ENCODE measurements at regions of chr1 and their contacts with region 1.

Region 1: DNA sequence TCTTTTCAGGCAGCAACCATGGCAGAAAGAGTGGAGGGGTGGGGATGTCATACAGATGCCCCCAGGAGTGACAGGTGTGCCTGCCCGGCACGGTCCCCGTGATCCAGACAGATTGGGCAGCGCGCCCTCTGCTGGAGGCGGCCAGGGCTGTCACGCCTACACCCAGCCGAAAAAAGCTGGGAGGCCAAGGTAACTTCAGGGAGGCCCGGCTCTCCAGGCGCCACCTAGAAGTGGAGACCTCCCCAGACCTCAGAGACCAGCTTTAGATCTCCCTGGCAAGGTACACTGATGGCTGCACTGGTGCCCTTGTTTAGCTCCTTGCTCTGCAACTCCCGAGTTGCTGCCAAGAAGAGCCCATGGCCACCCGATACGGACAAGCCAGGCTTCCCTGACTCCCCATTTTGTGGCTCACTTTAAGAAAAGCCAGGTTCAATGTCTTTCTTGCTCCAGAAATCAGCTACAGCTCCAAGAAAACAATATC is 6.6 kb downstream of the GOLT1A start:
- DNase-seq: peak; percentile 77
- H3K4me3 ChIP-seq: no peak overlapping the region
- H3K27ac ChIP-seq: no peak overlapping the region
- H3K4me1 ChIP-seq: peaks cover 0 to 6% (median 2%) of the 10 kb centered on the region in 4 donors
- H3K27me3 ChIP-seq: peaks cover 0 to 42% (median 0%) of the 10 kb centered on the region in 3 donors
- CTCF ChIP-seq: peak; percentile 53 to 88 (median 71)
- EP300 ChIP-seq: no peak
- POLR2A ChIP-seq: no peak

Region 2: GRCh38 chr1:203769505-203770343 is 437.5 kb before region 1 on chr1:
- intact Hi-C with region 1: no loop called
- DNase-seq: peak; percentile 92
- H3K4me3 ChIP-seq: peak overlapping the region in 2 of 4 donors; percentile 21 to 31
- H3K27ac ChIP-seq: peak overlapping the region; percentile 49 to 74 (median 63)
- H3K4me1 ChIP-seq: peaks cover 0 to 34% (median 22%) of the 10 kb centered on the region in 4 donors
- H3K27me3 ChIP-seq: no peaks in the 10 kb centered on the region
- CTCF ChIP-seq: no peak
- EP300 ChIP-seq: peak in 1 of 4 donors; percentile 8
- POLR2A ChIP-seq: no peak

Region 3: DNA sequence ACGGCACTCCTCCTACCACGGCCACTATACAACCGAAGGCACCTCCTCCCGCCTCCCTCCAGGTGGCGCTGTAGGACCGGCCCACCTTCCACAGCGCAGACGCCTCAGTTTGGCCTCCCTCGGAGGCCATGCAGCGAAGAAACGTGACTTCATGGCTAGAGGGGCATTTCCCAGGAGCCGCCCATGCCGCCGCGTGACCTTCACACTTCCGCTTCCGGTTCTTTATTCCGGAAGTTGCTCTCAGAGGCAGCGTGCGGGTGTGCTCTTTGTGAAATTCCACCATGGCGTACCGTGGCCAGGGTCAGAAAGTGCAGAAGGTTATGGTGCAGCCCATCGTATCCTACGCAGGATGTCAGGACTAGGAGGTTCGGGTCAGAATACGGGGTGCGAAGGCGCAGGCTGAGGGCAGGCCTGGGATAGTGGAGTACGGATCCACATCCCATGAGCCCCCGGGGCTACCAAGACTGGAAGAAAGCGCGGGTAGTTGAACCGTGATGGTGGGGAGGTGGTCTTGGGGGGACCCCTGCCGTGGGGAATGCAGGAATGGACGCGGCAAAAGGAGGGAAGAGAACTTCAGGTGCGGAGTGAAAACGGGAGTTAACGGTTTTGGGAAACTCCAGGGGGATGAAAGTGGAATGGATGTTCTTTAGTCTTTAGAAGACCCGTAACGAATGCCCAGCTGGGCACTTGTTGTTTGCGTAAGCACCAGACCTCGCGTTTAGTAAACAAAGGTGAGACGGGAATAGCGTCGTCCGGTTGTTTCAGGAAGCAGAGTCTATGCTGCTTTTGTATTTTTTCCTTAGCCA is 345.6 kb before region 1 on chr1 and contains the start of gene SNRPE:
- intact Hi-C with region 1: loop called (anchors 2 kb)
- DNase-seq: peak; percentile 98
- H3K4me3 ChIP-seq: peak within 1 kb of the TSS; percentile 61 to 92 (median 77)
- H3K27ac ChIP-seq: peak within 1 kb of the TSS; percentile 58 to 79 (median 71)
- H3K4me1 ChIP-seq: peaks cover 0 to 29% (median 25%) of the 10 kb centered on the region in 4 donors
- H3K27me3 ChIP-seq: no peaks in the 10 kb centered on the region
- CTCF ChIP-seq: peak; percentile 75 to 94 (median 88)
- EP300 ChIP-seq: peak in 1 of 4 donors; percentile 49
- POLR2A ChIP-seq: peak in 1 of 2 donors; percentile 30
- total RNA-seq, gene SNRPE: 23.1 to 66.0 (median 43.4) TPM

Region 4: DNA sequence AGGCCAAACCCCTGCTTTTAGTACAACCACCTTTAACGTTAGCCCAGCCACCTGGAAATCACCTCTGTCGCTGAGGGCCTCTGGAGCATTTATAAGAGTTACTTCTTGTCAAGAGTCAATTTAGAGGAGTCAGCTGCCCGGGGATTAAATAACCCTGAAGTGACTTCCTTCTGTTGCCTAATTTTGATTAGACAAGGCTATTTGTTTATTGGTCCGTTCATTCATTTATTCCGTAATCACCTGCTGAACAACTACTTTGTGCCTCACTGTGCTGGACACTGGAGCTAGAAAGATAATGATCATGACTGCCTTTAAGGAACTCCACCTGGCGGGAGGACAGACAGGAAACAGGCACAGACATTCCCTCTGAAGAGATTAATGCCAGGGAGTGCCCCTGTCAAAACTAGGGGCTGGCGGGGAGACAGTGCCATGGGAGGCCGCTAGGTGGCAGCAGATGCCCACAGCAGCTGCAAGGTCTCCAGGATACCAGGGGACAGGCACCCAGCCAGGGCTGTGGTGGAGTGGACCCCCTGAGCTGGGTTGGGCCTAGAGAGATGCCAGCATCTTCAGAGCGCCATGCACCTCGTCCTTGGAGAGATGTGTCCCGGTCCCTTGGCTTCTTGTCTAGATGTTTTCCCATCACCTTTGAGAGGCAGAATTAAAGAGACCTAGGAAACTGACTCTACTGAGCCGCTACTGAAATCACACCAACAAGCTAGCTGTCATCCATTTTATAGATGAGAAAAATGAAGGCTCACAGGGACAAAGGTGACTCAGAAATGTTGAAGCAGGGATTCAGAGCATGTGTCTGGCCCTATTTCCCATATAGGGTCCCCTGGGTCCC is 44.7 kb before region 1 on chr1:
- intact Hi-C with region 1: loop called (anchors 1 kb)
- DNase-seq: peak; percentile 86
- H3K4me3 ChIP-seq: no peak overlapping the region
- H3K27ac ChIP-seq: no peak overlapping the region
- H3K4me1 ChIP-seq: no peaks in the 10 kb centered on the region
- H3K27me3 ChIP-seq: peaks cover 0 to 10% (median 0%) of the 10 kb centered on the region in 3 donors
- CTCF ChIP-seq: peak; percentile 90 to 98 (median 94)
- EP300 ChIP-seq: no peak
- POLR2A ChIP-seq: no peak